SK-N-SH (cell line): ENCODE measurements at regions of chrX and their contacts with region 1.

Region 1: DNA sequence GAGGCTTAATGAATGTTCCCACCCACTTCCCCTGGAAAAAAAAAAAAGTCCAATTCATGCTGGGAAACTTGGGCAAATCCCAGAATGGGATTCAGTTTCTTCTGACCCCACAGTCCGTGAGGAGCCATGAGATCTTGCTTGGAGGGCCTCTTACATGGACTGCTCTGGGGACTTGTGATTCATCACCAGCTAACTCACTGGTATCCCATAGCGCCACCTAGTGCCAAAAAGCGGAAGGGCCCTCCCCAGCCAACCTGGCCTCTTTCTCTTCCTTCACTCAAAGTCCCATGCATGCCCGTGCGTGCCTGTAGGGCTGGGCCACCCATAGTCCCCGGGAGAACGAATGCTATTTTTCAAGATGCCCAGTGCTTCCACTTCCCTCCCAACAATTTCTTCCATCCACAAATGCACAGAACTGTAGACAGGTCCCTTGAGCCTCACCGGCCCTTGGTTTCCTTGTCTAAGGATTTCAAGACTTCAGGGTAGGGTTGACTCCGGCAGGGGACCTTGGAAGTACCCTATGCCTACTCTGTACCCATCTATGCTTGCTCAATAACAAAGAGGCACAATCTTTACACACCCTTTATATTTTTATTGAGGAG is 5.1 kb downstream of the RTL5 start:
- DNase-seq: peak; percentile 82
- H3K4me3 ChIP-seq: no peak overlapping the region; a peak in 1 of 4 replicates
- H3K27ac ChIP-seq: peak overlapping the region in 1 of 2 experiments; percentile 93; a peak in 2 of 4 replicates
- H3K4me1 ChIP-seq: peaks cover 14 to 80% of the 10 kb centered on the region in 2 experiments; a peak in 3 of 4 replicates
- H3K27me3 ChIP-seq: peaks cover 5% of the 10 kb centered on the region; the same call in 1 of the 2 replicates
- CTCF ChIP-seq: peak; percentile 95
- EP300 ChIP-seq: no peak
- RAD21 ChIP-seq: peak; percentile 95

Region 2: DNA sequence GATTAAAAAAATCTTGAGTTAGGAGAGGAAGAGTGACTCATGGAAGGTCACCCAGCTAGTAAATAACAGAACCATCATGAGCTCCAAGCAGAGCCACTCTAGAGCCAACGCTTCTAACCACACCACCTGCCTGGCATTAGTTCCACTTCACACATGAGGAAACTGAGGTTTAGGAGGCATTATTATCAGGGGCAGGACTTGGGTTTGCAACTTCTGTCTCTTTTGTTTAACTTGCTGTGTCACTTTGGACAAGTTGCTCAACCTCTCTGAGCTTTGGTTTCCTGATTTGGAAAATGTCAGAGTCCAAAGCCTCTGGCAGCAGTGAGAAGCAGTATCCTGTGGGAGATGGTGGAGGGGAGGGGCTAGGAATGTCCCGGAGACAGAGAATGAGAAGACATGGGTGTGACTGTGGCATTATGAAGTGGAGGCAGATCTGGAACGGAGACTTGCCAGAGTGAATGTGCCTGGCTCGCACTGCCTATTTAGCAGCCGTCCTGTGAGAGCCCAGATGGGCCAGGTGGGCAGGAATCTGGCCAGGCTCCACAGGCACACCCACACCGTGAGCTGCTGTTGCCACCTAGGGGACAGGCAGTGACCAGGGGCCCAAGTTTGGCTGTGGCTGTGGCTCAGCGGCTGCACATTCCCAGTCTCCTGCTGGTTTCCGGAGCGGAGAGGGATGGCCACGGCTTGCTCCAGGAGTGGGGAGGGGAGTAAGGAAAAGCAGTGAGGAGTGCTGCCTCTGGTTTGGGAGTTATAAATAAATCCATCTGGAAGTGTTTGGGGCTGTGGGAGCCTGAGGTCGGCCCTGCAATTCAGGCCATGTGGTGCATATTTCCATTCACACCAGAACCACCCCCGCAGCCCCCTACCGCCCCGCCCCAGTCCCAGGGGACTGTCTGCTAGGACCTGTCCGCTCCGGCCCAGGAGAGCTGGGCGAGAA is 122.6 kb before region 1 on chrX:
- CTCF ChIA-PET with region 1: interaction called, 59 read pairs
- POLR2A ChIA-PET with region 1: no interaction called
- DNase-seq: peak; percentile 48
- H3K4me3 ChIP-seq: no peak overlapping the region
- H3K27ac ChIP-seq: no peak overlapping the region; a peak in 1 of 4 replicates
- H3K4me1 ChIP-seq: peaks cover 0 to 8% of the 10 kb centered on the region in 2 experiments; a peak in 1 of 4 replicates
- H3K27me3 ChIP-seq: peaks cover 32% of the 10 kb centered on the region; the same call in 1 of the 2 replicates
- CTCF ChIP-seq: no peak
- EP300 ChIP-seq: no peak
- RAD21 ChIP-seq: peak; percentile 38; the same call in 1 of the 2 replicates

Region 3: DNA sequence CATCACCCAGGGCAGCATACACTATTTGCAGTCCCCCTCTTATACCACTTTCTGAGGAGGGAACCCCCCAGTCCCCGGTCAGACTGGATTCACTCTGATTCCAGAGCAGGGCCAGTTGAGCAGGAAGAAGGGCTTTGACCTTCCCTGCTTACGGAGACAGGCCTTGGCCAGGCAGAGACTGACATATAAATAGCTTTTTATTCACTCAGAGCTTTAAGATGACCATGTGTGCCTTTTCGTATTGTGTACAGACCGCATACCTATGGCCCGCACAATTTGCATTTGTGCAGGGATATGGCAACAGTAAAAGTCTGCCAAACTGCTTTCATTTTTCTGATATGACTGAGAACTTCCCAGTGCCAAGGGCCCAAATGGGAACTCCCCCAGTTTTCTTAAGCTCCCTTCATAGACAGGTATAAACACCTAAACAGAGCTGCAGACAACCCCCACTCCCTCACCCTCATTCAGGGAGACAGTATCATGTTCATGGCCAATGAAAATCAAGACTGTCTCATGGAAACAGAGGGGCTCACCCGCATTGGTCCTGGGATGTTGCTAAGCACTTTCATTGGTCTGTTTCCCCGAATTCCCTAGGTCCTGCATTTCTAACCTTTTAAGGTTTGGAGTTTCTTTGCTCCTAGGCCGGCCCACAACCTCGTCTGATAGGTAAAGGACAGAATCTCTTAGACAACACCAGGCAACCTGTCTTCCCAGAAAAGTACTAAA is 80.9 kb before region 1 on chrX:
- CTCF ChIA-PET with region 1: interaction called, 96 read pairs
- POLR2A ChIA-PET with region 1: interaction called, 12 read pairs
- DNase-seq: peak; percentile 66
- H3K4me3 ChIP-seq: no peak overlapping the region
- H3K27ac ChIP-seq: peak overlapping the region; percentile 25 to 99; a peak in 3 of 4 replicates
- H3K4me1 ChIP-seq: peaks cover 8 to 74% of the 10 kb centered on the region in 2 experiments; a peak in 3 of 4 replicates
- H3K27me3 ChIP-seq: peaks cover 3% of the 10 kb centered on the region; the same call in 1 of the 2 replicates
- CTCF ChIP-seq: no peak
- EP300 ChIP-seq: no peak
- RAD21 ChIP-seq: no peak

Region 4: DNA sequence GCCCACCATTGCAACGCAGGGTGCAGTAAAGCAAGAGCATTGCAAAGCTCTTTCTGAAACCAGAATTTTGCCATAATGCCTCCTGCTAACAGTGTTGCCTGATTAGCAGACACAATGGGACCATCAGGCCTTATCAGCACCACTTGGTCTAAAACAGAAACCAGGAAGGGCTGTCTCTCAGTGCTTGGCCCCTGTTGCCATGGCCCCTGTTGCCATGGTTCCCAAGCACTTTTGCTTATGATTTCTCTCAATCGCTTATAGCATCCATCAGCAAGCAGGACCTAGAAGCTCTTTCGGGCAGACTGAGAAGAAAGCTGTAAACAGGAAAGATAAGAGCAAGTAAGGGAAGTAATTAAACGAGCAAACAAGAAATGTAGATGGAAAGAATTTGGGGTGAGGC is 31.7 kb before region 1 on chrX:
- CTCF ChIA-PET with region 1: interaction called, 10 read pairs
- POLR2A ChIA-PET with region 1: interaction called, 6 read pairs
- DNase-seq: peak; percentile 90
- H3K4me3 ChIP-seq: no peak overlapping the region; a peak in 1 of 4 replicates
- H3K27ac ChIP-seq: peak overlapping the region in 1 of 2 experiments; percentile 96; a peak in 2 of 4 replicates
- H3K4me1 ChIP-seq: peaks cover 0 to 20% of the 10 kb centered on the region in 2 experiments; a peak in 2 of 4 replicates
- H3K27me3 ChIP-seq: no peaks in the 10 kb centered on the region; the same call in 1 of the 2 replicates
- CTCF ChIP-seq: no peak
- EP300 ChIP-seq: peak in 1 of 2 experiments; percentile 54; a peak in 1 of 4 replicates
- RAD21 ChIP-seq: no peak; the same call in 1 of the 2 replicates

Region 5: DNA sequence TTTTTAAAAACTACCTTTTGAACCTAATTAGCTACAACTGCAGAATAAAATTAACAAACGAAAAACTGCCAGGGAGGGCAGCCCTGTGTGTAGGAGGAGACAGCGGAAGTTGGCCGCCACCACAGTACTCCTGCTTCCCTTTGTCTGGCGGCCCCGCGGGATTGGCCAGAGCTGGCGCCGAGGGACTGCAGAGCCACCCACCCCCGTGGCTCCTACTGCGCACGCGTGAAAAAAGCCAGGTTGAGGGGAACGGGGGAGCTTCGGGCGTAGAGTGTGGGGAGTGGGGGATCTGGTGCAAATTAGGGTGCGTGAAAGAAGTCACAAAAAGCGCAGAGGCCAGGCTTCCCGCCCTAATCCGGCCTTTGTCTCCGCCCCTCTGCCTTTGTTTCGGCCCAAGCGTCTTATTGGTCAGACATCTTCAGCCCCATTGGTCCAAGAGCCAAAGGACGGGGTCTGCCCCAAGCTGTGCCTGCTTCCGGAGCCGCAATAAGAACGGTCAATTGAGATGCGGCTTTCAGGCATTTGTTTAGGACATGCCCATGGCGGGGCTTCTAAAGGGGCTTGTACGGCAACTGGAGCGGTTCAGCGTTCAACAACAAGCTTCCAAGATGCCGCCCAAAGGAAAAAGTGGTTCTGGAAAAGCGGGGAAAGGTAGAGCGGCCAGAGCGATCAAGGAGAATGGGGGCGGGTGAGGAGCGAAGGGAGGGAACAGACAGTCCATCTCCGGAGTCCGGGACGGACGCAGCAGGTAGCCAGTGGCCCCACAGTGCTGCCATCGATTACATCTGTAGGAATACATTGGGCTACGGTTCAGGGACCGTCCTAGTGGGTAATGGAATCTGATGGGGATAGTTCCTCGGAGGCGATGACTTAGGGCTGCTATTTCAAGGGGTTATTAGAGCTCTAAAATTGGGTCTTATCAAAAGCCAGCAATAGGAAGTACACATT is 54.8 kb after region 1 on chrX and contains the start of gene PIN4:
- CTCF ChIA-PET with region 1: interaction called, 3 read pairs
- POLR2A ChIA-PET with region 1: interaction called, 22 read pairs
- DNase-seq: peak; percentile 94
- H3K4me3 ChIP-seq: peak within 1 kb of the TSS; percentile 94 to 99
- H3K27ac ChIP-seq: peak within 1 kb of the TSS; percentile 76 to 99
- H3K4me1 ChIP-seq: peaks cover 2 to 10% of the 10 kb centered on the region in 2 experiments; a peak in 2 of 4 replicates
- H3K27me3 ChIP-seq: no peaks in the 10 kb centered on the region
- CTCF ChIP-seq: no peak
- EP300 ChIP-seq: no peak; a peak in 1 of 4 replicates
- RAD21 ChIP-seq: no peak
- polyA plus RNA-seq, gene PIN4: 22.3 and 29.8 TPM in 2 replicates